Gastrocnemius medialis (tissue), 4 donors: ENCODE measurements at regions of chr13 and their contacts with region 1.

Region 1: GRCh38 chr13:52450012-52450792 is at the start of gene VPS36:
- DNase-seq: peak; percentile 87 to 93
- ATAC-seq: peak; percentile 82 to 86
- H3K4me3 ChIP-seq: peak within 1 kb of the TSS; percentile 69 to 88 (median 77)
- H3K27ac ChIP-seq: peak within 1 kb of the TSS; percentile 85 to 97 (median 91)
- H3K4me1 ChIP-seq: peaks cover 25 to 28% of the 10 kb centered on the region in 2 donors
- H3K27me3 ChIP-seq: no peaks in the 10 kb centered on the region
- CTCF ChIP-seq: peak; percentile 97 to 100 (median 100)
- POLR2A ChIP-seq: peak; percentile 89 to 91
- total RNA-seq, gene VPS36: 27.1 to 55.7 (median 45.2) TPM

Region 2: GRCh38 chr13:51583875-51584730 is 866.1 kb before region 1 on chr13 and contains the start of gene WDFY2:
- in situ Hi-C with region 1: no loop called
- intact Hi-C with region 1: loop called (anchors 10 kb)
- DNase-seq: peak; percentile 100
- ATAC-seq: peak; percentile 96
- H3K4me3 ChIP-seq: peak within 1 kb of the TSS; percentile 79 to 91 (median 82)
- H3K27ac ChIP-seq: peak within 1 kb of the TSS; percentile 82 to 89 (median 85)
- H3K4me1 ChIP-seq: peaks cover 7 to 12% of the 10 kb centered on the region in 2 donors
- H3K27me3 ChIP-seq: no peaks in the 10 kb centered on the region
- CTCF ChIP-seq: peak in 2 of 5 experiments; percentile 3 to 20
- POLR2A ChIP-seq: peak; percentile 60 to 88
- total RNA-seq, gene WDFY2: 0.98 to 2.8 (median 1.7) TPM

Region 3: DNA sequence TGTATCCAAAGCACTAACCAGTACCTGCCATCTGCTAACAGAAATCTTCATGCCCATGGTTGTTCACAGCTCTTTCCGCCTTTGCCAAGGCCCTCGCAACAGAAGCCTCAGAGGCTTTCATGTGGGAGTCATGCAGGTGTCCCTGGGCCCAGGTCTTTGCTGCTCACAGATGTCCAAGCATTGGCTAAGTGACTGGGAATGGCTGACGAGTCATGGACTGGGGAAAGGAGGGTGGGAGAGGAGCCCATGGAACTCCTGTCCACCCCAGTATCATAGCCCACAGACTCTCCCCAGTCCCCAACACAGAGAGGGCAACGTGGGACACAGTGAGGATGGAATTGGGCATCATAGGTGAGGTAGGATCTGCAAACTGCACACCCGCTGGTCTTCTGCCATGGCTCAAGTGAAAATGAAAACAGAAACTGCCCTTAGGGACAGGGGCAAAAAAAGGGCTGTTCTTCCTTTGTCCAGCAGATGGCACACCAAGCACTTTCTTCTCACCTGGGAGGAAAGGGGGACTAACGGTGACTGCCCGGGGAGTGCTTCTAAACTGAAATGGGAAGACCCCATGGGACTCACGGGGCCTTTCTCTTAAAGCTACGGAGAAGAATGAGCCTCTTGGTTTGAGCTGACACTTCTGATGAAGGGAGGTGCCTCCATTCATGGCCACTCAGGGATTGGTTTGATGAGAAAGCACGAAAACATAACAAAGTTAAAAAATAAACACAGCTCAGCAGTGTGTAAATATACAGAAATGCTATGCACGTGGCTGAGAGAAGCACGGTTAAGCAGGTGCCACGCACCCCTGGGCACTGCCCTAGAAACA is 635.2 kb before region 1 on chr13:
- in situ Hi-C with region 1: loop called in 2 of 4 experiments (anchors 10 to 25 kb)
- intact Hi-C with region 1: no loop called
- DNase-seq: peak in 1 of 2 donors; percentile 51
- ATAC-seq: peak; percentile 46 to 79
- H3K4me3 ChIP-seq: peak overlapping the region in 2 of 4 donors; percentile 13 to 33
- H3K27ac ChIP-seq: no peak overlapping the region
- H3K4me1 ChIP-seq: peaks cover 16 to 21% of the 10 kb centered on the region in 2 donors
- H3K27me3 ChIP-seq: no peaks in the 10 kb centered on the region
- CTCF ChIP-seq: peak; percentile 58 to 85 (median 78)
- POLR2A ChIP-seq: no peak

Region 4: GRCh38 chr13:52194184-52194868 is 255.9 kb before region 1 on chr13:
- in situ Hi-C with region 1: loop called (anchors 10 to 25 kb)
- intact Hi-C with region 1: loop called (anchors 1 kb)
- DNase-seq: peak; percentile 69 to 81
- ATAC-seq: peak; percentile 93 to 94
- H3K4me3 ChIP-seq: peak overlapping the region; percentile 74 to 98 (median 88)
- H3K27ac ChIP-seq: peak overlapping the region; percentile 81 to 88 (median 87)
- H3K4me1 ChIP-seq: peaks cover 11 to 25% of the 10 kb centered on the region in 2 donors
- H3K27me3 ChIP-seq: no peaks in the 10 kb centered on the region
- CTCF ChIP-seq: no peak
- POLR2A ChIP-seq: peak in 1 of 2 donors; percentile 22

Region 5: DNA sequence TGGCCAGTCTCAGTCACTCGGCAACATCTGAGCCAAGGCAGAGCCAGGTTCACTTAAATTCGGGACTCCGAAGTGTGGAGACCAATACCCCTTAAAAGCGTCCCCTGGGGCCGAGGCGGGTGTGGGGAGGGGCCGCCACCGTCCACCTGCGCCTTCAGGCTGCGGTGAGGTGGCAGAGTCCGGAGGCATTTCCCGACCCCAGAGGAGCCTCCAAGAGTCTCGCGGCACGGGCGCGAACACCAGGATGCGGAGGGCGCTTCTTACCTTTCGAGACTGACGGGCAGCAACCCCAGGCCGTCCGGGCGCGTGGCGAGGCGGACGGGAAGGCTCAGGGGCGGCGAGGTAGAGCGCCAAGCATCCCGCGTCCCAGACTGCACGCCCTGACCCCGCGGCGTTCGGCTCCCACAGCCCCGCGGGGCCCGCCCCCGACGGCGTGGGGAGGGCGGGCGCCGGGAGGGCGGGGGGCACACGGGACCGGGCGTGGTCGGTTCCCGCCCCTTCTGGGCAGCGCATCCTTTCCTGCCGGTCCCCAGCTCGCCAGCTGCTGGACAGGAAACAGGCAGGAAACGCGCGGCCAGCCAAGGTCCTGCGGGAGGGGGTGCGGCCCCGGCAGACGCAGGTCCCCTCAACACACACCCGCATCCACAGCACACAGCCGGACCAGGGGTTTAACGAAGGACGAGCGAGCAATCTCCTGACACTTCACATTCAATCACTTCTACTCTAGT is 44.3 kb before region 1 on chr13 and contains the start of gene THSD1:
- in situ Hi-C with region 1: no loop called
- intact Hi-C with region 1: loop called (anchors 2 kb)
- DNase-seq: peak; percentile 16 to 51
- ATAC-seq: peak; percentile 67 to 72
- H3K4me3 ChIP-seq: peak within 1 kb of the TSS; percentile 51 to 66 (median 60)
- H3K27ac ChIP-seq: peak within 1 kb of the TSS; percentile 34 to 68 (median 59)
- H3K4me1 ChIP-seq: peaks cover 0 to 4% of the 10 kb centered on the region in 2 donors
- H3K27me3 ChIP-seq: peaks cover 0 to 8% (median 6%) of the 10 kb centered on the region in 3 donors
- CTCF ChIP-seq: no peak
- POLR2A ChIP-seq: peak in 1 of 2 donors; percentile 30
- total RNA-seq, gene THSD1: 3.6 to 4.9 (median 4.5) TPM